Activated CD4-positive, alpha-beta memory T cell treated with anti-CD3 and anti-CD28 coated beads for 36 hours (primary cell): ENCODE measurements at regions of chr1 and their contacts with region 1.

Region 1: DNA sequence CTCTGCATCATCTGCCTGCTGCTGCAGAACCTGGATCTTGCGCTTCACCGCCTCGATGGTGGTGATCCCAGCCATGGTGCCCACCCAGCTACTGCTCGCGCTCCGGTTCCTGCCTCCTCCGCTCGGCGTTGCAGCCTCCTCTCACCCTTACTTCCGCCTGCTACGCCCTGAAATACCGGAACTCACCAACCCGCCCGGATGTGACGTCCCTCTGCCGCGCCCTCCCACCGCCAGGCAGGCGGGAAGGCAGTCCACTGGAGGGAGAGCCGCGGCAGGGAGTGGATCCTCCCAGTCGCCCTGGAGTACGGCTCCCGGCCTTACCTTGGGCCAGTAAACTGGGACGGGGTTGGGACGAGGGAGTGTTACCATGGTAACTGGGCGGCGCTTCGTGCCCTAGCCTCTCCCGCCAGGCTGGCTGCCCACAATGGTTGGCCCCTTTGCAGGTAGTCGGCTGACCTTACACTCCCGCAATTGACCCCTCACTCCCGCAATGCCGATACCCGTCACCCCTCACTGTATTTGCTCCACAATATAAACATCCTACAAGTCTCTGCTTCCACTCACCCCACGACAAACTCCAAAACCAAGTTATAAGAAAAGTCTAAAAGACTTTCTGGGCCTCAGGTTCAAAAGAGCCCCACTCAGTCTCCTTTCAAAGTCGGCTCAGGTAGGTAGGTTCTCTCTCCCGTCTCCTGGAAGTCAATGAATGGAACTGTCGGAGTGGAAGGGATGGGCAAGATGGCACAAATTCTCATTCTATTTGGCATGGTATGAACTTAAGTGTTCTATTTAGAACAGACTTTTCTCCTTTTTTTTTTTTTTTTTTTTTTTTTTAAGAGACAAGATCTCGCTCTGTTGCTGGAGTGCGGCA is 8.6 kb downstream of the TPM3 start:
- DNase-seq: peak; percentile 98
- H3K4me3 Mint-ChIP-seq: peak overlapping the region; percentile 98
- H3K27ac Mint-ChIP-seq: peak overlapping the region; percentile 96
- H3K4me1 Mint-ChIP-seq: peaks cover 37% of the 10 kb centered on the region
- H3K27me3 Mint-ChIP-seq: no peaks in the 10 kb centered on the region

Region 2: GRCh38 chr1:153816283-153816889 is 366.9 kb before region 1 on chr1:
- CTCF ChIA-PET with region 1: no interaction called
- POLR2A ChIA-PET with region 1: no interaction called
- intact Hi-C with region 1: no loop called
- DNase-seq: no peak
- H3K4me3 Mint-ChIP-seq: no peak overlapping the region
- H3K27ac Mint-ChIP-seq: no peak overlapping the region
- H3K4me1 Mint-ChIP-seq: no peaks in the 10 kb centered on the region
- H3K27me3 Mint-ChIP-seq: no peaks in the 10 kb centered on the region

Region 3: DNA sequence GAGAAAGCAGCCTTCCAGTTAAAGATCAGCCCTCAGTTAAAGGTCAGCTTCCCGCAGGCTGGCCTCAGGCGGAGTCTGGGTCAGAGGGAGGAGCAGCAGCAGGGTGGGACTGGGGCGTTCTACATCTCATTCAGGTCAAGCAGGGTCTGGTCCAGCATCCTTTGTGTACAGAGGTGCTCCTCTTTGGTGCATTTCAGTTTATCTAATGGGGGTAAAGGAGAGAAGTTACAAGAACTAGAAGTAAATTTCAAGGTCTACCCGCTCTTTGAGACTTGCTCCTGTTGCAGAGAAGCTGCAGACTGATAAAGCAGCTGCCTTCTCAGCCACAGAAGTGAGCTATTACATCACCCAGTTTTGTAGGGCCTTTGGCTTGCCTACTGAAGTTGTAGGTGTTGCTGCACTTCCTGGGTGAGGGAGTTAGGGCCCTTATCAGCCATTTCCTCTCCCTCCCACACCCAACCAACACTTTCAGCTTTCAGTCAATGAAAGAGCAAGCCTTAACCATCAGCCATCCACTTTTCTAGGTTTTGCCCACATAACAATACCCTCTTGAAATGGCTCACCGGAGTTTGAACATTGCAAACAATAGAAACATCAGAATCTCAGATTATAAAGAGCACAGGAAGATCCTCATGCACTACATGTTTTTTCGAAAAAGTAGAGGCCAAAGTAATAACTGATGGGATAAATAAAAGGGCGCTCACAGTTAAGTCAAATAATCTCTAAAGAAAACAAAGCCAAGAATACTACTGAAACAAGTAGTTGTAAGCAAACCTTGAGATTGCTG is 25.6 kb before region 1 on chr1:
- CTCF ChIA-PET with region 1: no interaction called
- POLR2A ChIA-PET with region 1: interaction called, 13 read pairs
- intact Hi-C with region 1: loop called (anchors 1 kb)
- DNase-seq: peak; percentile 83
- H3K4me3 Mint-ChIP-seq: peak overlapping the region; percentile 47
- H3K27ac Mint-ChIP-seq: peak overlapping the region; percentile 85
- H3K4me1 Mint-ChIP-seq: peaks cover 69% of the 10 kb centered on the region
- H3K27me3 Mint-ChIP-seq: no peaks in the 10 kb centered on the region

Region 4: DNA sequence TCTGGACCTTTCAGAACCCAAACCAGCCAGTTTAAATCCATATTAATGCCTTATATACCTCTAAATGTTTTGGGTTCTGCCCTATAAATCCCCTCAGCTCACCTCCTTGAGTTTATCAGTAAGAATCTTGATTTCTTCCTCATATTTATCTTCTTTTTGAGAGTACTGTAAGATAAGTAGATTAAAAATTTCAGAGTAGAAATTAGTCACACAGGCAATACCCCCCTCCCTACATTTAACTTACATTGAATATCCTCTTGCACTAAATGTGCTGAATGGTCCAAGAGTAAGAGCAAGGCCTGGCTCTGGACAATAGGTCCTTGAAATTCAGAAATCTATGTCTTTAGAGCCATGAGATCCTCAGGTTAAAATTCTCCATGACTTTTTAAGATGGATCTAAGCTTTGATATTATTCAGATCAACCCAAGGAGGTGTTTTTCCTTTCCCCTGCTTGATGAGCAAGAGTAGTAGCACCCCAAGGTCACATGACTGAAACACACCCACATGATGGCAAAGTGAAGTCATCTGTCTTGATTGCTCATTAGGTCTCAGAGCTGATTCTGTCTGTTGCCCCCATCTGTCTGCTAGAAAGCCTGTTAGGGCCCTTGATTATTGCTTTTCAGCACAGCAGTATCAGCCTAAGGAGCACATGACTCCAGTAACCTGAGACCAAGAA is 12.6 kb before region 1 on chr1:
- CTCF ChIA-PET with region 1: interaction called, 3 read pairs
- POLR2A ChIA-PET with region 1: interaction called, 14 read pairs
- intact Hi-C with region 1: loop called (anchors 1 kb)
- DNase-seq: peak; percentile 81
- H3K4me3 Mint-ChIP-seq: peak overlapping the region; percentile 8
- H3K27ac Mint-ChIP-seq: peak overlapping the region; percentile 78
- H3K4me1 Mint-ChIP-seq: peaks cover 55% of the 10 kb centered on the region
- H3K27me3 Mint-ChIP-seq: no peaks in the 10 kb centered on the region

Region 5: GRCh38 chr1:154213274-154213673 is 30.0 kb after region 1 on chr1:
- CTCF ChIA-PET with region 1: interaction called, 3 read pairs
- POLR2A ChIA-PET with region 1: no interaction called
- intact Hi-C with region 1: loop called (anchors 2 kb)
- DNase-seq: no peak
- H3K4me3 Mint-ChIP-seq: no peak overlapping the region
- H3K27ac Mint-ChIP-seq: peak overlapping the region; percentile 86
- H3K4me1 Mint-ChIP-seq: peaks cover 54% of the 10 kb centered on the region
- H3K27me3 Mint-ChIP-seq: no peaks in the 10 kb centered on the region

Region 6: GRCh38 chr1:154220071-154220969 is 37.0 kb after region 1 on chr1 and contains the start of gene UBAP2L:
- CTCF ChIA-PET with region 1: interaction called, 3 read pairs
- POLR2A ChIA-PET with region 1: interaction called, 21 read pairs
- intact Hi-C with region 1: loop called (anchors 1 kb)
- DNase-seq: peak; percentile 99
- H3K4me3 Mint-ChIP-seq: peak within 1 kb of the TSS; percentile 90
- H3K27ac Mint-ChIP-seq: peak within 1 kb of the TSS; percentile 94
- H3K4me1 Mint-ChIP-seq: peaks cover 68% of the 10 kb centered on the region
- H3K27me3 Mint-ChIP-seq: peaks cover 2% of the 10 kb centered on the region
- total RNA-seq, gene UBAP2L: 180 to 183 TPM

Region 7: DNA sequence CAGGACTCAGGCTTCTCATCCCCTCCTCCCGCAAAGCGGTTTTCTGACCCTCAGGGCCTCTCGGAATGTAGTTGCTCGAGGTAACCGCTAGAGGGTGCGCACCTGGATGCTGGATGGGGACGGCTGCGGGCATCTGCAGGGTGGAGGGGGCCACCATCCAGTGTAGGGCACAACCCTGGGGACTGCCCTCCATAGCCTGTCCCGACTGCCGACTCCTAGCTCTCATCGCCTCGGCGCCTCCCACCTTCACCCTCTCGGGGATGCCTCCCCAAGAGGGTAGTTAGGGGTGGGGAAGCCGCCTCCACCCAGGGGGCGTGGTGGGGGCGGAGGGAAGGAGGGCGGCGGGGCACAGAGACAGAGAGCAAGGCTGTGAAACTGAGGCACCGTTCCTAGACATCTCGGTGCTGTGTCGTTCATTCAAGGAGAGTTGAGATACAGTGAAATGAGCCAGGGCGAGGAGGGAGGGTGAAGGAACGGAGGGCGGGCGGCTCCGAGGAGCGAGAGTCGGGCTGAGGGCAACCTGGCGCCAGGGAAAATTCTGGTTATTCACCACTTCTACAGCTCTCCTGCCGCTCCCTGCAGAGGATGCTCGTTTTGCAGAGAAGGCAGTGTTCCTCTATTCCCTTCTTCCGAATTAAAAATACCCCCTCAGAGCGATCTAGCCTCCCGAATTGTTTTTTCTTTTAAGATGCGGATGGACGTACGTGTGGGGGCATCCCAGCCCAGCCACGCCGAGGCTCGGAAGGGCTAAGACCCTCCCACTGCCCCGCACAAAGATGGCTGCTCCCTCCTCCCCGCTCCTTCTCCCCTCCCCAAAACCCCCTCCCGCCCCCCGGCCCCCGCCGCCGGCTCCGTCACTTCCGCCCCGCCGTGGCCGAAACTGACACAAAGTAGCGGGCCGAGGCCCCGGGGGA is 141.6 kb after region 1 on chr1 and contains the start of gene ATP8B2:
- CTCF ChIA-PET with region 1: interaction called, 4 read pairs
- POLR2A ChIA-PET with region 1: interaction called, 5 read pairs
- intact Hi-C with region 1: loop called (anchors 5 kb)
- DNase-seq: peak; percentile 91
- H3K4me3 Mint-ChIP-seq: peak within 1 kb of the TSS; percentile 98
- H3K27ac Mint-ChIP-seq: peak within 1 kb of the TSS; percentile 94
- H3K4me1 Mint-ChIP-seq: peaks cover 36% of the 10 kb centered on the region
- H3K27me3 Mint-ChIP-seq: no peaks in the 10 kb centered on the region
- total RNA-seq, gene ATP8B2: 58.5 to 59.9 TPM

Region 8: DNA sequence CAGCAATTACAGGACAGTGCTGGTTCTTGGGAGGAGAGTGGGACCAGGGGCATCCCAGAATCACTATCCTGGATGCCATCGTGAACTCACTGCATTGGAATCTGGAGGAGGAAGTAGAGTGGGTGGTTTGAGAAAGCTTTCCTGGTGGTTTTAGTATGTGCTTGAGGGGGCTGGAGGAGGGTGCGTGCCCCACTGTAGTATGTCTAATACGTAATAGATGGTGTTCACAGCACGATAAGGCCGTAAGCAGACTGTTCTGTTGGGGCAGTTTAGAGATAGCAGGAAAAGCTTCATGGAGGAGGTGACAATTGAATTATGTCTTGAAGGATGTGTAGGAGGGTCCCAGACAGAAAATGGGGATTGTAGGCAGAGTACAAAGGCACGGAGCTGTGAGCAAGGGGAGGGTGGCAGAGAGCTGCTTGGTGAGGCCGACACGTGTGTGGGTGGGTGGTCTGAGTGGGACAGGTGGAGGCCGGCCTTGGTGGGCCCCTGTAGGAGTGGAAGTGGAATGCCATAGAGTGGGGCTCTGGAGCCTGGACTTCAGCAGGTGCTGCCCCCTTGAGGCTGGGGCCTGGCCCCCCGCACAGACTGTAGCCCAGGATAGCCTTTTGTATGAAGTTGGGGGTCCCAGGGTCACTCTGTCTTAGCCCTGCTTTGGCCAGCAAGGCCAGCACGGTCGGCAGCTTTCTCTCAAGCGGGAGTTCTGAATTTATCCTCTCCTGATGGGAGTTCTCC is 258.9 kb after region 1 on chr1:
- CTCF ChIA-PET with region 1: no interaction called
- POLR2A ChIA-PET with region 1: no interaction called
- intact Hi-C with region 1: no loop called
- DNase-seq: no peak
- H3K4me3 Mint-ChIP-seq: no peak overlapping the region
- H3K27ac Mint-ChIP-seq: peak overlapping the region; percentile 61
- H3K4me1 Mint-ChIP-seq: peaks cover 71% of the 10 kb centered on the region
- H3K27me3 Mint-ChIP-seq: no peaks in the 10 kb centered on the region

Region 9: DNA sequence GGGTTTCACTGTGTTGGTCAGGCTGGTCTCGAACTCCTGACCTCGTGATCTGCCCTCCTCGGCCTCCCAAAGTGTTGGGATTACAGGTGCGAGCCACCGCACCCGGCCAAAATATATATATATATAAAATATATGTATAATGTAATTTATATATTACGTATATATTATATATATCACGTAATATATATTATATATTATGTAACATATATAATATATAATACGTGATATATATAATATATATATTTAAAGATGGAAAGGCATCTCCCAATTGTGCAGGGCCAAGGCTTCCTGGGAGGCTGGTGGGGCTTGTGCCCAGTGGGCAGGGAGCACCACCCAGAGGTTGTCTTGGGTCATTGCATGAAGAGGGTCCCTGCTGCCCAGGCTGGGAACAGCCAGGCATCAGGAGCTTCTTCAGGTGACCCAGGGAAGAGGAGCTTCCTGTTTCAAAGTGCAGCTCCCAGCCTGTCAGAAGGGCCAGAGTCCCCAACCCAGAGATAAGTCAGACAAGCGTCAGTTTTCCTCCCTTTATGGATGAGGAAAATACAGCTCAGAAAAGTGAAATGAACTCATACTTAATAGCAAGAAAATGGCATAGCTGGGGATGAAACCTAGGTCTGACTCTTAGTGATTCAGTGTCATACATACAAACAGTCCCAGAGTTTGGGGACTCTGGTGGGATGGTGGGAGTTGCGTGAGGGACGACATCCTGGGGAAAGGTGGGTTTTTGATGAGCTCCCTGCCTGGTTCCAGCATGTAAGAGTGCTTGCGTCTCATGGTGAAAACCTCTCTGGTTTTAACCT is 363.2 kb after region 1 on chr1:
- CTCF ChIA-PET with region 1: no interaction called
- POLR2A ChIA-PET with region 1: no interaction called
- intact Hi-C with region 1: loop called (anchors 5 kb)
- DNase-seq: peak; percentile 74
- H3K4me3 Mint-ChIP-seq: no peak overlapping the region
- H3K27ac Mint-ChIP-seq: peak overlapping the region; percentile 19
- H3K4me1 Mint-ChIP-seq: peaks cover 20% of the 10 kb centered on the region
- H3K27me3 Mint-ChIP-seq: no peaks in the 10 kb centered on the region